ENCODE measurements at regions of chr22 and their contacts with region 1.

Region 1: DNA sequence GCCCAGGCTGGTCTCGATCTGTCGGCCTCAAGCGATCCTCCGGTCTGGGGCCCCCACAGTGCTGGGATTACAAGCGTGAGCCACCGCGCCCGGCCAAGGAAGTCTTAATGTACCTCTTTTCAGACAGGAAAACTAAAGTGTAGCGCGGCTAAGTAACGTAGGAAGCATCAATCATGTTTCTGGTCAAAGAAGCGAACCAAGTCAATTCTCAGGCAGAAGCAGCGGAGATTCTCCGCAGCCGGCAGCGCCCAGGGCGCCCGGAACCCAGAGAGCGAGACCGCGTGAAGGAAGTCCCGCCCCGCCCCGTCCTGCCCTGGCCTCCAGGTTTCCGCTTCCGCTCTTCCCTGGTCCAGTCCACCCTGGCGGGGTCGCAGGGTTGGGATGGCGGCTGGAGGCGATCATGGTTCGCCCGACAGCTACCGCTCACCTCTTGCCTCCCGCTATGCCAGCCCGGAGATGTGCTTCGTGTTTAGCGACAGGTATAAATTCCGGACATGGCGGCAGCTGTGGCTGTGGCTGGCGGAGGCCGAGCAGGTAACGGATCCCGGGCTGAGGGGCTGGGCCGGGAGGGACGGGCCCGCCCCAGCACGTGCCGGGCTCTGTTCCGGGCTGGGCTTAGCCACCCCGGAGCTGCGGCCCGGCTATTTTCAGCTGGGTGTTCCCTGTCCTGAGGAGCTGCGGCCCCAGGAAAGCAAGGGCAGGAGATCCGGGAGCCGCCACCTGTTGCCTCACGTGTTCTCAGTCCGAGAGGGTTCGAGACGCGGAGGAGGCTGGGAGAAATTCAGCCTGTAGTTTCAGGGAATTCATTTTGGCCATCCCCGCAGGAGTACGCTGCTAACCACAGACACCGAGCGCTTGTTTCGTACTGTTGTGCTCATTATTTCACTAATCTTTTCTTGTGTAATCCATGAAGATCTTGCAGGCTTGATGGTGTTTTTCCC is at the start of gene ADSL:
- DNase-seq: peak; percentile 89
- H3K4me3 ChIP-seq: peak within 1 kb of the TSS; percentile 67 to 71
- H3K27ac ChIP-seq: peak within 1 kb of the TSS; percentile 80 to 90
- H3K4me1 ChIP-seq: peaks cover 0 to 5% of the 10 kb centered on the region in 2 experiments; a peak in 3 of 4 replicates
- H3K27me3 ChIP-seq: no peaks in the 10 kb centered on the region
- CTCF ChIP-seq: no peak
- EP300 ChIP-seq: no peak
- RAD21 ChIP-seq: no peak
- polyA plus RNA-seq, gene ADSL: 79.7 and 99.1 TPM in 2 replicates

Region 2: GRCh38 chr22:40036591-40037225 is 309.7 kb before region 1 on chr22:
- CTCF ChIA-PET with region 1: interaction called, 19 read pairs
- POLR2A ChIA-PET with region 1: no interaction called
- DNase-seq: peak; percentile 70
- H3K4me3 ChIP-seq: peak overlapping the region in 1 of 2 experiments; percentile 26; a peak in 1 of 4 replicates
- H3K27ac ChIP-seq: no peak overlapping the region
- H3K4me1 ChIP-seq: peaks cover 4 to 6% of the 10 kb centered on the region in 2 experiments; a peak in 2 of 4 replicates
- H3K27me3 ChIP-seq: no peaks in the 10 kb centered on the region
- CTCF ChIP-seq: peak; percentile 65
- EP300 ChIP-seq: no peak
- RAD21 ChIP-seq: peak; percentile 88

Region 3: DNA sequence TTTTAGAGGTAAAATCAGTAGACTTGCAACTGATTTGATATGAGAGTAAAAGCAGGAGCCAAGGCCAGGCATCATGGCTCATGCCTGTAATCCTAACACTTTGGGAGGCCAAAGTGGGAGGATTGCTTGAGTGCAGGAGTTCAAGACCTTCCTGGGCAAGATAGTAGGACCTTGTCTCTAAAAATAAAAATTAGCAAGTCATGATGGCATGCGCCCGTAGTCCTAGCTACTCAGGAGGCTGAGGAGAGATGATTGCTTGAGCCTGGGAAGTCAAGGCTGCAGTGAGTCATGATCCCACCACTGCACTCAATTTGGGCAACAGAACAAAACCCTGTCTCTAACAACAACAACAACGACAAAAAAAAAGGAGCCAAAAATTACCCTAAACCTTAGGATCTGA is 37.5 kb after region 1 on chr22:
- CTCF ChIA-PET with region 1: no interaction called
- POLR2A ChIA-PET with region 1: no interaction called
- DNase-seq: no peak
- H3K4me3 ChIP-seq: no peak overlapping the region
- H3K27ac ChIP-seq: peak overlapping the region in 1 of 2 experiments; percentile 24; a peak in 1 of 4 replicates
- H3K4me1 ChIP-seq: no peaks in the 10 kb centered on the region; a peak in 1 of 4 replicates
- H3K27me3 ChIP-seq: no peaks in the 10 kb centered on the region
- CTCF ChIP-seq: no peak
- EP300 ChIP-seq: no peak
- RAD21 ChIP-seq: no peak

Region 4: GRCh38 chr22:40499187-40499753 is 152.8 kb after region 1 on chr22:
- CTCF ChIA-PET with region 1: no interaction called
- POLR2A ChIA-PET with region 1: no interaction called
- DNase-seq: peak; percentile 14
- H3K4me3 ChIP-seq: no peak overlapping the region
- H3K27ac ChIP-seq: peak overlapping the region; percentile 64 to 99; a peak in 3 of 4 replicates
- H3K4me1 ChIP-seq: no peaks in the 10 kb centered on the region; a peak in 3 of 4 replicates
- H3K27me3 ChIP-seq: no peaks in the 10 kb centered on the region
- CTCF ChIP-seq: no peak
- EP300 ChIP-seq: peak; percentile 26 to 91; a peak in 3 of 4 replicates
- RAD21 ChIP-seq: no peak